ENCODE measurements at regions of chr4 and their contacts with region 1.

Region 1: DNA sequence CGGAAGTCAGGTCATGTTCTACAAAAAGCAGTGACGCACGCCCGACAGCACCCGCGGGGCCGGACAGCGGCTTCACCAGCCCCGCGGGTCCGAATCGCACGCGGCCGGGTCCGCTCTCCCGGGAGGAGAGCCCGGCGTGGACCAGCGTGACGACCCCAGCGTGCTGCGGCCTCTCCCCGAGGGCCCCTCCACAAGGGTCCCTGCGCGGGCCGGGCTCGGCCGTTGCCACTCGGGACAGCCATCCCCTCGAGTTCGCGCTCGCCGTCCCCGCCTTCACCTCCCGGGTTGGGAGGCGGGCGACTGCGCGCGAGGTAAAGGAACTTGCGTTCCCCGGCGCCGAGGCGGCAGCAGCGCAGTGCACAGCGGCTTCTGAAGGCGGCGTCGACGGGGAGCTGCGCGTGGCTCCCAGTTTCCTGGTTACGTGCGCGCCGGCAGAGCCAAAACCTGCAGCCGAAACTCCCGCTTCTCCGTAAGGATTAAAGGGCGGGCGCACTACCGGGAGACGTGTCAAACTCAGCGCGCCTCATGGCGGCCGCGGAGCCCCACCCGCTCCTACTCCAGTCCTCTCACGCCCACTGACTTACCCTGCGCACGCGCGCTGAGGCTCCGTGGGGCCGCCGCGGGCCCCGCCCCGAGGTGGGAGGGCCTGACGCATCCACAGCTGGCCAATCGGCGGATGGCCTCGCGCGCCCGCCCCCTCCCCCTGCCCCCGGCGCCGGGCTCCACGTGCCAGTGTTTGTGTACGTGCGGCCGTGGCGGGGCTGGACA is 416 bp upstream of the LRP2BP start:
- DNase-seq: peak; percentile 97 to 98
- H3K4me3 ChIP-seq: peak overlapping the region; percentile 76 to 89 (median 86)
- H3K27ac ChIP-seq: peak overlapping the region; percentile 99 to 100
- H3K4me1 ChIP-seq: no peaks in the 10 kb centered on the region
- H3K27me3 ChIP-seq: no peaks in the 10 kb centered on the region
- CTCF ChIP-seq: peak in 1 of 3 donors; percentile 29
- POLR2A ChIP-seq: peak; percentile 83

Region 2: DNA sequence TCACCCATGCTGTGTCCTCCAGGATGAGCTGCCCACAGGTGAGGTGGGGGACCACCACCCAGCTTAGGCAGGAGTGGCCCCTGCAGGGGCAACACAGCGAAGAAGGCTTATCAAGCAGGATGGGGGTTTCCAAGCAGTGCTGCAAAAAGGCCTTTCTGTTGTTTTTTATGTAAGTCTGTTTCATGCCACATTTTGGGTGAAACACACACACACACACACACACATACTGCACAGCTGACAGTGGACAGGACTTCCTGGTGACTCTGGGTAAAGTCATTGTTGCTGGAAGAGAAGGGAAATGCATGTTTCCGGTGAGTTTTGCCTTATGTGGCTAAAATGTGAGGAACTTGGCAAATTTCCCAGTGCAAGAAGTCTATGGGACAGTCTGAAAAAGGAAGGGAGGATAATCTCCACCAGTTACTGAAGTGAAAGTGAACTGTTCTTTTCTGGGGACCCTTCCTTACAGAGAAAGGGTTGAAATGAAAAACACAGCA is 1041.0 kb before region 1 on chr4:
- intact Hi-C with region 1: no loop called
- DNase-seq: peak in 1 of 2 donors; percentile 46
- H3K4me3 ChIP-seq: no peak overlapping the region
- H3K27ac ChIP-seq: peak overlapping the region; percentile 69 to 76
- H3K4me1 ChIP-seq: no peaks in the 10 kb centered on the region
- H3K27me3 ChIP-seq: no peaks in the 10 kb centered on the region
- CTCF ChIP-seq: no peak
- POLR2A ChIP-seq: no peak

Region 3: GRCh38 chr4:184705692-184706091 is 690.4 kb before region 1 on chr4:
- intact Hi-C with region 1: no loop called
- DNase-seq: no peak
- H3K4me3 ChIP-seq: no peak overlapping the region
- H3K27ac ChIP-seq: no peak overlapping the region
- H3K4me1 ChIP-seq: no peaks in the 10 kb centered on the region
- H3K27me3 ChIP-seq: no peaks in the 10 kb centered on the region
- CTCF ChIP-seq: no peak
- POLR2A ChIP-seq: no peak

Region 4: DNA sequence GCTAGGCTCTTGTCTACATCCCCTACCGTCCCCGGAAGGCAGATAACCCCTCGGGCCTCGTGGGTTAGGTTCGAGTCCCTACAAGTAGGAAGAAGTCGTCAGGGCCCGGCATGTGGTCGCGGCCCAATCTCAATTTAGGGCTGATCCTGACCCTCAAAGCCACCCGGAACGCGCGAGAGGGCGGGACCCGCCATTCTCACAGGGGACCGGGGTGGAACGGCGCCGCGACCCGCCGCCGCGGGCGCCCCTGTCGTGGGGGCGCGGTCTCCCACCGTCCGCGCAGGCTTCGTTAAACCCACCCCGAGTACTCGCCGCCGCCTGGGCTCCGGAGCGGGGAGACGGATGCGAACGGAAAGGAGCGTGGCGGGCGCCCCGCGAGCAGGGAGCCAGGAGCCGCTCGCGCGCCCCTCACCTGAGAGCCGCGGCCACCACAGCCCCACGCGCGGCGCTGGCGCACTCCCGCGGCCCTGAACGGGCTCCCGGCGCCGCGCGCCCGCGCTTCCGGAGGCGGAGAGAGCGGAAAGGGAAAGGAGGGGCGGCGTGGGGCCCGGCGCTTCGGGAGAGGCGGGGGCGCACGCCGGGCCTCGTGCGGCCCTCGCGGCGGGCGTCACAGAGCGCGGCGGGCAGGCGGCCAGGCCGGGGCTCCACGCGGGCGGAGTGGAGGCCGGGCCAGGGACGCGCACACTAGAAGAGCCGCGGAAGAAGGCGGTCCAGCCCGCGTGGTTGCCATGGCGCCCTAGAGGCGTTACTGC is 192.5 kb before region 1 on chr4 and contains the start of gene CFAP97:
- intact Hi-C with region 1: loop called (anchors 10 kb)
- DNase-seq: peak; percentile 79
- H3K4me3 ChIP-seq: peak within 1 kb of the TSS; percentile 68 to 98 (median 81)
- H3K27ac ChIP-seq: peak within 1 kb of the TSS; percentile 99 to 100
- H3K4me1 ChIP-seq: no peaks in the 10 kb centered on the region
- H3K27me3 ChIP-seq: no peaks in the 10 kb centered on the region
- CTCF ChIP-seq: no peak
- POLR2A ChIP-seq: no peak
- total RNA-seq, gene CFAP97: 36.6 to 42.4 (median 38.0) TPM